ENCODE measurements at regions of chr6 and their contacts with region 1.

Region 1: DNA sequence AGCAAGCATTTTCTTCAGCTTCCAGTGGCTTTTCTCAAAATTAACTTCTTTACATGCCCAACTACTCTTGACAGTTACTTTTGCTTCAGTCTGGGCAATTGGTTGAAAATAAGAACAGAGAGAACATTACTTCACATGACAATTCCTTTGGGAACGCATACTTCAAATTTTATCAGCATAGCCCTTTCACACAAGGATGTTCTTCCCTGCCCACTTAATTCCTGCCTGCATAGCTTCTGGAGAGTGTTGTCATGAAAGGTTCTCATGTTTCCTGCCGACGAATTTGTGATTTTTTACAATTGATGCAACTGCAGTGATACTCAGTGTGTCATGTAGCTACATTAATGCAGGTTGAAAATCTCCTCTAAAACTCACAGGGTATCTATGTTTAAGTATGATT is 22.0 kb upstream of the SNRNP48 start:
- DNase-seq: no peak

Region 2: DNA sequence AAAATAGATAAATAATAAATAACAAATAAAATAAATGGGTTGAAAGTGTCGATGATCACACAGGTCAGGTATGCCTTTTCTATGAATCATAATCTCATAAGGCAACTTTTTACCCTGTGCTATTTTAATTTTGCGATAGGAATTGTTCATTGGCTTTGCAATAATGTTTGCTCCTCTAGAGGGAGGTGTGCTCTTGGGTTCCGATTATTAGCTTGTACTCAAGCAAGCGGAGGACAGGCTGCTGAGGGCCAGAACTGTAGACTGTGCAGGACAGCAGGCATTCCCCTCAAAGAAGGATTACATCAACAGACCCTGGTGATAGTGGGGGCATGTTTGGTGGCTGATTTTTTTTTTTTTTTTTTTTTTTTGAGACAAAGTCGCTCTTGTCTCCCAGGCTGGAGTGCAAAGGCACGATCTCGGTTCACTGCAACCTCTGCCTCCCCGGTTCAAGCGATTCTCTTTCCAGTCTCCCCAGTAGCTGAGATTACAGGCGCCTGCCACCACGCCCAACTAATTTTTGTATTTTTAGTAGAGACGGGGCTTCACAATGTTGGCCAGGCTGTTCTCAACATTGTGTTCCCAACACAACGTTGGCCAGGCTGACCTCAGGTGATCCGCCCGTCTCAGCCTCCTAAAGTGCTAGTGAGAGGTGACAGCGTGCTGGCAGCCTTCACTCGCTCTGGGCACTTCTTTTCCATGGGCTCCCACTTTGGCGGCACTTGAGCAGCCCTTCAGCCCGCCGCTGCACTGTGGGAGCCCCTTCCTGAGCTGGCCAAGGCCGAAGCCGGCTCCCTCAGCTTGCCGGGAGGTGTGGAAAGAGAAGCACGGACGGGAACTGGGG is 142.8 kb before region 1 on chr6:
- intact Hi-C with region 1: loop called (anchors 5 kb)
- DNase-seq: no peak